GM12878 (cell line): ENCODE measurements at regions of chrX and their contacts with region 1.

Region 1: DNA sequence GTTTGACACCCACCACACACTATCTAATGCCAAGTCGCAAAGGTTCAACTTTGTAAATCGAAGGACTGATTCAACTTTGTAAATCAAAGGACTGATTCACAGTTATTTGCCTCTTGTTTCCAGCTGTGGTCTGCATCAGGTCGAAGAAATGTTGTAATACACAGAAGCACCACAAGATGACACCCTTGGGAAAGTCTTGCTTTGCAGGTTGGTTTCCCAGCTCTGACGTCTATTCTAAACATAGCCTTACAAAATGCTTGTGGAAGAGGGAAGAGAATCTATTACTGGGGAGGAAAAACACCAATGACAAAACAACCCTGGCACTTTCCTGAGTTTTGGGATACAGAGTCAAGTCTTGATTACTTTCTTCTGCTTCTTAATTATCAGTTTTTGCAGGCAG is 35.3 kb downstream of the SUPT20HL1 start:
- DNase-seq: peak; percentile 51
- ATAC-seq: peak; percentile 94
- H3K4me3 ChIP-seq: no peak overlapping the region
- H3K27ac ChIP-seq: no peak overlapping the region
- H3K4me1 ChIP-seq: no peaks in the 10 kb centered on the region
- H3K27me3 ChIP-seq: no peaks in the 10 kb centered on the region
- CTCF ChIP-seq: peak; percentile 77 to 91 (median 85)
- EP300 ChIP-seq: no peak
- POLR2A ChIP-seq: no peak
- RAD21 ChIP-seq: peak; percentile 98

Region 2: GRCh38 chrX:24371391-24371972 is 24.3 kb before region 1 on chrX:
- CTCF ChIA-PET with region 1: interaction called, 32 read pairs
- POLR2A ChIA-PET with region 1: no interaction called
- RAD21 ChIA-PET with region 1: interaction called, 3 read pairs
- SMC1A ChIA-PET with region 1: interaction called, 6 read pairs
- in situ Hi-C with region 1: no loop called
- intact Hi-C with region 1: no loop called
- DNase-seq: peak; percentile 8
- ATAC-seq: peak; percentile 97
- H3K4me3 ChIP-seq: no peak overlapping the region
- H3K27ac ChIP-seq: no peak overlapping the region
- H3K4me1 ChIP-seq: no peaks in the 10 kb centered on the region
- H3K27me3 ChIP-seq: peaks cover 0 to 2% of the 10 kb centered on the region in 2 experiments; a peak in 1 of 4 replicates
- CTCF ChIP-seq: peak; percentile 72 to 79 (median 73)
- EP300 ChIP-seq: no peak
- POLR2A ChIP-seq: no peak
- RAD21 ChIP-seq: peak; percentile 70

Region 3: DNA sequence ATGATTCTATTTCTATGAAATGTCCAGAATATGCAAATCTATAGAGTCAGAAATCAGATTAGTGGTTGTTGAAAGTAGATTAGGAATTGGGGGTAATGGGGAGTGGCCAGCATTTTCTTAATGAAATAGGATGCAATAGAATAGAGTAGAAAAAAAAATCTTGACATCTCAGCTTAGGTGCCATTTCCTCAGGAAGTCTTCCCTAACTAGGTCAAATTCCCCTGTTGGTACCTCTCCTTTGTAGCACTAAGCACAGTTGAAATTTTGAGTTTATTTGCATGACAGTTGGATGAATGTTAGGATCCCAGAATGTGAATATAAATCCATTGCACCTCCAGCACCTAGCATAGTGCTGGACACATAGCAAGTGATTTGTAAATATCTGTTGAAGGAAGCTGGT is 39.3 kb after region 1 on chrX:
- CTCF ChIA-PET with region 1: no interaction called
- POLR2A ChIA-PET with region 1: no interaction called
- RAD21 ChIA-PET with region 1: no interaction called
- SMC1A ChIA-PET with region 1: no interaction called
- in situ Hi-C with region 1: no loop called
- intact Hi-C with region 1: no loop called
- DNase-seq: no peak
- ATAC-seq: no peak
- H3K4me3 ChIP-seq: no peak overlapping the region
- H3K27ac ChIP-seq: no peak overlapping the region
- H3K4me1 ChIP-seq: no peaks in the 10 kb centered on the region
- H3K27me3 ChIP-seq: no peaks in the 10 kb centered on the region; a peak in 2 of 4 replicates
- CTCF ChIP-seq: no peak
- EP300 ChIP-seq: no peak
- POLR2A ChIP-seq: no peak
- RAD21 ChIP-seq: no peak

Region 4: GRCh38 chrX:24561121-24561520 is 165.3 kb after region 1 on chrX:
- CTCF ChIA-PET with region 1: interaction called, 56 read pairs
- POLR2A ChIA-PET with region 1: no interaction called
- RAD21 ChIA-PET with region 1: interaction called, 20 read pairs
- SMC1A ChIA-PET with region 1: interaction called, 28 read pairs
- in situ Hi-C with region 1: no loop called
- intact Hi-C with region 1: loop called (anchors 1 kb)
- DNase-seq: no peak
- ATAC-seq: peak; percentile 82
- H3K4me3 ChIP-seq: no peak overlapping the region
- H3K27ac ChIP-seq: no peak overlapping the region
- H3K4me1 ChIP-seq: no peaks in the 10 kb centered on the region
- H3K27me3 ChIP-seq: no peaks in the 10 kb centered on the region; a peak in 2 of 4 replicates
- CTCF ChIP-seq: peak; percentile 35 to 51 (median 42); a peak in 3 of 6 replicates
- EP300 ChIP-seq: no peak
- POLR2A ChIP-seq: no peak
- RAD21 ChIP-seq: peak; percentile 53